ENCODE measurements at regions of chr13 and their contacts with region 1.

Region 1: GRCh38 chr13:97018029-97018831 is 24.0 kb upstream of the OXGR1 start:
- DNase-seq: no peak
- ATAC-seq: peak in 1 of 4 donors; percentile 76
- H3K4me3 ChIP-seq: no peak overlapping the region
- H3K27ac ChIP-seq: no peak overlapping the region
- H3K4me1 ChIP-seq: no peaks in the 10 kb centered on the region
- H3K27me3 ChIP-seq: no peaks in the 10 kb centered on the region
- CTCF ChIP-seq: peak; percentile 87

Region 2: GRCh38 chr13:96202315-96202714 is 815.9 kb before region 1 on chr13:
- intact Hi-C with region 1: no loop called
- DNase-seq: no peak
- ATAC-seq: no peak
- H3K4me3 ChIP-seq: no peak overlapping the region
- H3K27ac ChIP-seq: no peak overlapping the region
- H3K4me1 ChIP-seq: no peaks in the 10 kb centered on the region
- H3K27me3 ChIP-seq: no peaks in the 10 kb centered on the region
- CTCF ChIP-seq: no peak

Region 3: GRCh38 chr13:97359181-97360057 is 341.2 kb after region 1 on chr13:
- intact Hi-C with region 1: loop called in 1 of 2 experiments (anchors 5 kb)
- DNase-seq: no peak
- ATAC-seq: peak; percentile 80 to 95 (median 88)
- H3K4me3 ChIP-seq: no peak overlapping the region
- H3K27ac ChIP-seq: no peak overlapping the region
- H3K4me1 ChIP-seq: peaks cover 11% of the 10 kb centered on the region
- H3K27me3 ChIP-seq: no peaks in the 10 kb centered on the region
- CTCF ChIP-seq: peak; percentile 87

Region 4: DNA sequence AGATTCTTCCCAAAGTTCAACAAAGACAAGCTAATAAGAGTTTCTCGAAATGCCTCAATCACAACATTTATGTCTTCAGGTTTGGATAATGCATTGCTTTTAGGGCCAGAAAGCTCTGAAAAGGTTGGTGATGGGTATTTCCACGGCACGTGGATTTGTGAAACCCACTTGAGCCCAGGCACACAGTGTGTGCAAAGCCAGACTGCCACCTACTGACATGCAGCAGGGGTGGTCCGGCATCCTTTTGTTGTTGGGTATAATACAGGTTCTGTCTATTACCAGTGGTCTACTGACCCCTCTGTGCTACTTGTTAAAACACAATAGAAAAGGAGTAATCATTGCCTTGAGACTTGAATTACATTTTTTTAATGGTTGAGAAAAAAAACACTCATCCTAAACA is 641.4 kb after region 1 on chr13:
- intact Hi-C with region 1: loop called in 1 of 2 experiments (anchors 10 kb)
- DNase-seq: no peak
- ATAC-seq: peak in 3 of 4 donors; percentile 50 to 57 (median 57)
- H3K4me3 ChIP-seq: no peak overlapping the region
- H3K27ac ChIP-seq: no peak overlapping the region
- H3K4me1 ChIP-seq: peaks cover 8% of the 10 kb centered on the region
- H3K27me3 ChIP-seq: no peaks in the 10 kb centered on the region
- CTCF ChIP-seq: peak; percentile 56

Region 5: GRCh38 chr13:97802213-97802612 is 784.0 kb after region 1 on chr13:
- intact Hi-C with region 1: loop called in 1 of 2 experiments (anchors 5 kb)
- DNase-seq: no peak
- ATAC-seq: no peak
- H3K4me3 ChIP-seq: no peak overlapping the region
- H3K27ac ChIP-seq: no peak overlapping the region
- H3K4me1 ChIP-seq: no peaks in the 10 kb centered on the region
- H3K27me3 ChIP-seq: peaks cover 0 to 3% (median 2%) of the 10 kb centered on the region in 3 donors
- CTCF ChIP-seq: no peak